ENCODE measurements at regions of chr5 and their contacts with region 1.

Region 1: GRCh38 chr5:163695830-163696578 is 190.6 kb downstream of the MAT2B start:
- DNase-seq: peak; percentile 67
- H3K4me3 Mint-ChIP-seq: no peak overlapping the region
- H3K27ac Mint-ChIP-seq: no peak overlapping the region
- H3K4me1 Mint-ChIP-seq: peaks cover 8% of the 10 kb centered on the region
- H3K27me3 Mint-ChIP-seq: no peaks in the 10 kb centered on the region
- CTCF ChIP-seq: peak; percentile 68

Region 2: GRCh38 chr5:163770625-163771024 is 74.6 kb after region 1 on chr5:
- CTCF ChIA-PET with region 1: no interaction called
- intact Hi-C with region 1: no loop called
- DNase-seq: no peak
- H3K4me3 Mint-ChIP-seq: no peak overlapping the region
- H3K27ac Mint-ChIP-seq: no peak overlapping the region
- H3K4me1 Mint-ChIP-seq: no peaks in the 10 kb centered on the region
- H3K27me3 Mint-ChIP-seq: peaks cover 31% of the 10 kb centered on the region
- CTCF ChIP-seq: no peak

Region 3: DNA sequence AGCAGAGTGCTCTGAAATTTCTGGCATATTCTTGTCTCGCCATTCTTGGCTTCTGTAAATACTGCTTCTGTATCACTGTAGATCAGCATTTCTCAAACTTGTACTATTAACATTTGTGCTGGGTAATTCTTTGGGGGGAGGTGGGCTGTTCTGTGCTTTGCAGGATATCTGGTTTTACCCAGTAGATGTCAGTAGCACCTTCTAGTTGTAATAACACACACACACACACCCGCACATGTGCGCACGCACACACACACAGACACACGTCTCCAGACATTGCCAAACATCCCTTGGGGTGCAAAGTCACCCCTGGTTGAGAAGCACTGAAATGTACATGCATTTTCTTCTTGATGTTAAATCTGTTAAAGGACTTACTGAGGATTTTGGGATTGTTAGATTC is 113.5 kb after region 1 on chr5:
- CTCF ChIA-PET with region 1: interaction called, 11 read pairs
- intact Hi-C with region 1: no loop called
- DNase-seq: no peak
- H3K4me3 Mint-ChIP-seq: no peak overlapping the region
- H3K27ac Mint-ChIP-seq: no peak overlapping the region
- H3K4me1 Mint-ChIP-seq: no peaks in the 10 kb centered on the region
- H3K27me3 Mint-ChIP-seq: no peaks in the 10 kb centered on the region
- CTCF ChIP-seq: no peak

Region 4: GRCh38 chr5:164013077-164013670 is 317.2 kb after region 1 on chr5:
- CTCF ChIA-PET with region 1: interaction called, 14 read pairs
- intact Hi-C with region 1: loop called (anchors 1 kb)
- DNase-seq: peak; percentile 75
- H3K4me3 Mint-ChIP-seq: no peak overlapping the region
- H3K27ac Mint-ChIP-seq: no peak overlapping the region
- H3K4me1 Mint-ChIP-seq: peaks cover 12% of the 10 kb centered on the region
- H3K27me3 Mint-ChIP-seq: no peaks in the 10 kb centered on the region
- CTCF ChIP-seq: peak; percentile 77

Region 5: DNA sequence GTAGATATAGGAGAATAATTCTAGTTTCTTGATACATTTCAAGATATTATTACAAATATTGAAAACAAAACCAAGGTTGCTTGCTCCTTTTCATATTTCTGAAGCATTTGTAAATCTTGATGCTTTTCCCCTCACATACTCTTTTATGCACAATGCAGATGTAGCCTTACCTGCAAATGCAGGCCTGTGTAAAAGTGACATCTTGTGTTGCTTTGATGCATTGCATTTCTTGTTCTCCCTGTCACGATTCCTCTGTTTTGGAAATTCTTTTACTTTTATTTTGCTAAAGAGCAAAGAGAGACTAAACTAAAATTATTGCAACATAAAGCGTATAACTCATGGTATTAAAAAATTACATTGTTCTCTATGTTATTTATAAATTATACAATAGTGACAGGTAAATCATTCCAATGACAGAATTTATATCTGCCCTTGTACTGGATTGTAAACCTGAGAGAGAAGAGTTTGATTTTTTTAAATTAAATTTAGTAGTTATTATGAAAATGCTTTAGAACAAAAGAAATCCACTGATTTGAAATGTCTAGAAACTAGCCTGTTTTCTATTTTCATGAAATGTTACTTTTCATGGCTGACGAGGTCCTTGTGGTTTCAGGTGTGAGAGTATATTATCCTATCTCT is 779.5 kb after region 1 on chr5:
- CTCF ChIA-PET with region 1: no interaction called
- intact Hi-C with region 1: loop called (anchors 2 kb)
- DNase-seq: peak; percentile 34
- H3K4me3 Mint-ChIP-seq: no peak overlapping the region
- H3K27ac Mint-ChIP-seq: no peak overlapping the region
- H3K4me1 Mint-ChIP-seq: no peaks in the 10 kb centered on the region
- H3K27me3 Mint-ChIP-seq: no peaks in the 10 kb centered on the region
- CTCF ChIP-seq: peak; percentile 58

Region 6: GRCh38 chr5:165209086-165209727 is 1513.2 kb after region 1 on chr5:
- CTCF ChIA-PET with region 1: no interaction called
- intact Hi-C with region 1: loop called (anchors 10 kb)
- DNase-seq: peak; percentile 6
- H3K4me3 Mint-ChIP-seq: no peak overlapping the region
- H3K27ac Mint-ChIP-seq: no peak overlapping the region
- H3K4me1 Mint-ChIP-seq: peaks cover 8% of the 10 kb centered on the region
- H3K27me3 Mint-ChIP-seq: no peaks in the 10 kb centered on the region
- CTCF ChIP-seq: peak; percentile 56

Measured in Calu3 (cell line).